Heart left ventricle (tissue), 16 donors: ENCODE measurements at regions of chr3 and their contacts with region 1.

Region 1: GRCh38 chr3:31132132-31132769 is 237.8 kb upstream of the GADL1 start:
- DNase-seq: no peak
- ATAC-seq: peak in 2 of 4 donors; percentile 52 to 61
- H3K4me3 ChIP-seq: no peak overlapping the region
- H3K27ac ChIP-seq: no peak overlapping the region
- H3K4me1 ChIP-seq: no peaks in the 10 kb centered on the region
- H3K27me3 ChIP-seq: no peaks in the 10 kb centered on the region
- CTCF ChIP-seq: peak in 11 of 12 donors; percentile 32 to 74 (median 62)
- POLR2A ChIP-seq: no peak

Region 2: GRCh38 chr3:30012941-30013543 is 1119.2 kb before region 1 on chr3:
- intact Hi-C with region 1: loop called in 1 of 10 experiments (anchors 5 kb)
- DNase-seq: peak; percentile 48 to 75 (median 58)
- ATAC-seq: peak in 2 of 4 donors; percentile 61 to 73
- H3K4me3 ChIP-seq: no peak overlapping the region
- H3K27ac ChIP-seq: no peak overlapping the region
- H3K4me1 ChIP-seq: no peaks in the 10 kb centered on the region
- H3K27me3 ChIP-seq: no peaks in the 10 kb centered on the region
- CTCF ChIP-seq: peak; percentile 41 to 79 (median 67)
- POLR2A ChIP-seq: no peak

Region 3: DNA sequence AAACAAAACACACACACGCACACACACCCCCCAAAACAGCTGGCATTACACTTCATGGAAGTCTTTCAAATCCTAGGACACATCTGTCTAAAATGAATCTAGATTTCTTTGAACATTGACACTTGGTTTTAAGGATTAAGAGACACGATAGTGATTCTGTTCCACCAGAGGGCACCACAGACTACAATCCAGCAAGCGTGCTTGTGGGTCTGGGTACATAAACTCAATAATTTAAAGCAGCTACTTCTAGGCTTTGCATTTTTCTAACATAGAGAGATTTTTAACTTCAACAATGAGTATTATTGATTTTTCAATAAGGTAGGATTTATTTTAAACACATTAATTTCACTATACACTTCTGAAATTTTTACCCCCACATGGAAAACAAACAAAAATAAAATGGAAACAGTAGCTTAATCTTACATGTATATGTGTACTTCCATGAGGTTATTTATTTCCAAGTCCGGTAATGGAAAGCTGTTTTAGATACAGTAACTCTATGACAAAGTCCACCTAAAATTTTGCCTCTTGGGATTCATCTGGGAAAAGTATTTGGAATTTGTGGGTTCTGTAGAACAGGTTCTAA is 1089.9 kb before region 1 on chr3:
- intact Hi-C with region 1: loop called in 1 of 10 experiments (anchors 10 kb)
- DNase-seq: peak in 4 of 5 donors; percentile 35 to 55 (median 50)
- ATAC-seq: peak in 3 of 4 donors; percentile 46 to 78 (median 66)
- H3K4me3 ChIP-seq: no peak overlapping the region
- H3K27ac ChIP-seq: no peak overlapping the region
- H3K4me1 ChIP-seq: peaks cover 0 to 21% (median 1%) of the 10 kb centered on the region in 12 donors
- H3K27me3 ChIP-seq: no peaks in the 10 kb centered on the region
- CTCF ChIP-seq: peak; percentile 67 to 85 (median 78)
- POLR2A ChIP-seq: no peak